Common myeloid progenitor, CD34-positive (primary cell): ENCODE measurements at regions of chr4 and their contacts with region 1.

Region 1: DNA sequence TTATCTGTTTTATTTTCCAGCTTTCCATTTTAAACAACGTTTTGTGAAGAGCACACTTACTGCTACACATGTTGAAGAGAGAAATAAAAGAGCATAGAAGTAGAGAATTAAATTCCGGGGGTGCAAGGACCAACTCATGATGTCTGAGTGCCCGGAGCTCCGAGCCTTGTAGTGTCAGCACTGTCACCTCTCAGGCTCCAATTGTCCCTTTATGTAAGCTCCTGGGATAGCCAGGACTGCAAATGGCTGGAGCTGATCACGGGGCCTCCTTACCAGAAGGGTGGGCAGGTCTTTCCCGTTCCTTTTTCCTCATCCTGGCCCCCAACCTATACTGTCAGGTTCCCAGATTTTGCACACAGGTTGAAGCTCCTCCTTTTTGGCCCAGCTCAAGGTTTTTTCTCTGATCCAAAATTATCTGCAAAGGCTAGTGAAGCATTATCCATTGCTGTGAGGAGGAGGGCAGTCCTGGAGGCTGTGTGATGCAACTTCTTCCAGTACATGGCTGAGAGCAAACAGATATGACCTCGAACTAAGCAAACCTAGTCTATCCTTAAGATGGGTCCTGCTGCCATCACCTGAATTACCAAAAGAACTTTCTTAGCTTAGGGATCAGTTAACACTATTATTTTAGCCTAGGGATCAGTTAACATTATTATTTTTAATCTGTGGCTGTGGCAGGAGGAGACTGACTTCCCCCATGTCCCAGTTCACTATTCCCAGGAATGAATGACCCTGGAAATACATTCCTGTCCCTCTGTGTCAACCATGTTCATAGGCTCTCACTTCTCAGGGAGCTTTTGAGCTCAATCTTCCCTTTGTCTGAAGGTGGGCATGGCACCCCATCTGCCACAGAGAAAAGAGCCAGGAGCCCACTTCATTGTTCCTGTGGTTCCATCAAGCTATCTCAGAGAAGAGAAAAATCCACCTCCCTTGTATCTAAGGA is at the start of gene FGG:
- DNase-seq: no peak
- H3K4me3 ChIP-seq: no peak within 1 kb of the TSS
- H3K27ac ChIP-seq: no peak within 1 kb of the TSS
- H3K4me1 ChIP-seq: peaks cover 0 to 7% (median 4%) of the 10 kb centered on the region in 4 experiments
- H3K27me3 ChIP-seq: no peaks in the 10 kb centered on the region

Region 2: GRCh38 chr4:154551872-154552686 is 60.7 kb before region 1 on chr4:
- CTCF ChIA-PET with region 1: interaction called, 495 read pairs
- POLR2A ChIA-PET with region 1: no interaction called
- DNase-seq: peak; percentile 78 to 89 (median 85)
- H3K4me3 ChIP-seq: no peak overlapping the region
- H3K27ac ChIP-seq: no peak overlapping the region
- H3K4me1 ChIP-seq: peaks cover 8 to 20% (median 12%) of the 10 kb centered on the region in 4 experiments
- H3K27me3 ChIP-seq: no peaks in the 10 kb centered on the region

Region 3: GRCh38 chr4:154559494-154560418 is 53.0 kb before region 1 on chr4:
- CTCF ChIA-PET with region 1: interaction called, 495 read pairs
- POLR2A ChIA-PET with region 1: no interaction called
- DNase-seq: peak; percentile 60 to 63 (median 60)
- H3K4me3 ChIP-seq: no peak overlapping the region
- H3K27ac ChIP-seq: no peak overlapping the region
- H3K4me1 ChIP-seq: no peaks in the 10 kb centered on the region
- H3K27me3 ChIP-seq: peaks cover 0 to 3% (median 0%) of the 10 kb centered on the region in 5 experiments

Region 4: DNA sequence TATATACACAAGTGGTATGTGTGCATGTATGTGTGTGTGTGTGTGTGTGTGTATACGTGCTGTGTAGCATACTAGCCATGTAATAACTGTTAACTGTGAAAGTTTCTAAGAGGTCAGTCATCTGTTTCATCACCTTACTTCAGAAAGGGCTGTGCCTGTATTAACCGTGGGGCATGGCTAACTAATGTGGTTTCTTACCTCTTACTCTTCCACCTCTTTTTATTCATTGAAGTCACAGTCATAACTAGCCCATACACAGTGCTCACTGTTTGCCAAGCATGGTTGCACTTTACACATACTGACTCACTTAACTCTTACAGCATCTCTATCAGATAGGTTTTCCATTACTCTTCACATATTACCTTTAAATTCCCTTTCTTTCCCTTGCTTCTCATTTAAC is 107.4 kb after region 1 on chr4:
- CTCF ChIA-PET with region 1: no interaction called
- POLR2A ChIA-PET with region 1: no interaction called
- DNase-seq: no peak
- H3K4me3 ChIP-seq: no peak overlapping the region
- H3K27ac ChIP-seq: no peak overlapping the region
- H3K4me1 ChIP-seq: no peaks in the 10 kb centered on the region
- H3K27me3 ChIP-seq: peaks cover 0 to 4% (median 0%) of the 10 kb centered on the region in 5 experiments

Region 5: GRCh38 chr4:155403886-155404285 is 791.1 kb after region 1 on chr4:
- CTCF ChIA-PET with region 1: no interaction called
- POLR2A ChIA-PET with region 1: no interaction called
- DNase-seq: peak; percentile 57 to 79 (median 77)
- H3K4me3 ChIP-seq: no peak overlapping the region
- H3K27ac ChIP-seq: no peak overlapping the region
- H3K4me1 ChIP-seq: no peaks in the 10 kb centered on the region
- H3K27me3 ChIP-seq: no peaks in the 10 kb centered on the region

Region 6: GRCh38 chr4:155809835-155810234 is 1197.1 kb after region 1 on chr4:
- CTCF ChIA-PET with region 1: no interaction called
- POLR2A ChIA-PET with region 1: no interaction called
- DNase-seq: peak; percentile 75 to 86 (median 84)
- H3K4me3 ChIP-seq: no peak overlapping the region
- H3K27ac ChIP-seq: no peak overlapping the region
- H3K4me1 ChIP-seq: peaks cover 0 to 4% (median 0%) of the 10 kb centered on the region in 4 experiments
- H3K27me3 ChIP-seq: no peaks in the 10 kb centered on the region